ENCODE measurements at regions of chr10 and their contacts with region 1.

Region 1: DNA sequence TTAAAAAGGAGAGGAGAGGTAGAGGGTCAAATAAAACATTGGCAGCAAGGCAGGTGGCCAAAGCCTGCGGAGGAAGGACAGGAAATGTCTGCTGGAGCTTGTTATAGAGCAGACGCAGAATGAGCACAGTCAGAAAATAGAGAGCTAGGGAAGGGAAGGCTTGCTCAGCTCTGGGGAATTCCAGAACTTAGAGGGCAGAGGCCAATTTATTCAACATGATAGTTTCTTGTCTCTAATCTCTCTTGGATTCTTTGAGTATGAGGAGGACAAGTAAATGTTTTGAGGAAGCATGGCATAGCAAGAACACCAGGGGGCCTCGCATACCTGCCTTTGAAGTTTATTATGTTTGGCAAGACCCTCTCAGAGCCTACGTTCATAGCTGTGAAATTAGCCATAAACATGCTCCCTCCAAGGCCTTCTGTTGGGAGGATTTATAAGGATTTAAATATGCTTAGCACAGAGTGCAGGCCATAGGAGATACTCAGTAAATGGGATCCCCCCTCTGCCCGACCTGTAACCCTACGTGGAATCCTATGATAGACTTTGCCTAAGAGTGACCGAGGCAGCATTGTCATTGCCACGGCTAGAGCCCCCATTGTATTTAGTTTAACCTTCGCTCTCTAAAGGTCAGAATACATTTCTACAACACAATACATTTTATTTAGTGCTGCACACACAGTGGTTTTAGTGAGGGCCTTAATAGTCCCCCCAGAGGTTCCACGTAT is 293.9 kb downstream of the CCDC3 start:
- DNase-seq: peak; percentile 95
- H3K4me3 ChIP-seq: no peak overlapping the region
- CTCF ChIP-seq: peak; percentile 25

Region 2: GRCh38 chr10:12214763-12215218 is 492.8 kb before region 1 on chr10:
- in situ Hi-C with region 1: loop called (anchors 5 kb)
- DNase-seq: peak; percentile 48
- H3K4me3 ChIP-seq: no peak overlapping the region
- CTCF ChIP-seq: peak; percentile 55

Region 3: GRCh38 chr10:12650122-12650521 is 57.5 kb before region 1 on chr10:
- in situ Hi-C with region 1: loop called (anchors 5 kb)
- DNase-seq: no peak
- H3K4me3 ChIP-seq: no peak overlapping the region
- CTCF ChIP-seq: no peak

Region 4: GRCh38 chr10:12768156-12769100 is 60.8 kb after region 1 on chr10:
- in situ Hi-C with region 1: loop called (anchors 5 kb)
- DNase-seq: peak; percentile 69
- H3K4me3 ChIP-seq: no peak overlapping the region
- CTCF ChIP-seq: no peak

Measured in astrocyte of the cerebellum (primary cell).